ENCODE measurements at regions of chr3 and their contacts with region 1.

Region 1: GRCh38 chr3:24494618-24495325 is at the start of gene THRB:
- DNase-seq: peak; percentile 72
- ATAC-seq: peak; percentile 55
- H3K4me3 ChIP-seq: peak within 1 kb of the TSS; percentile 95
- H3K27ac ChIP-seq: peak within 1 kb of the TSS; percentile 73
- H3K4me1 ChIP-seq: peaks cover 54% of the 10 kb centered on the region
- H3K27me3 ChIP-seq: no peaks in the 10 kb centered on the region
- CTCF ChIP-seq: no peak
- total RNA-seq, gene THRB: 7.0 and 9.7 TPM in 2 replicates

Region 2: DNA sequence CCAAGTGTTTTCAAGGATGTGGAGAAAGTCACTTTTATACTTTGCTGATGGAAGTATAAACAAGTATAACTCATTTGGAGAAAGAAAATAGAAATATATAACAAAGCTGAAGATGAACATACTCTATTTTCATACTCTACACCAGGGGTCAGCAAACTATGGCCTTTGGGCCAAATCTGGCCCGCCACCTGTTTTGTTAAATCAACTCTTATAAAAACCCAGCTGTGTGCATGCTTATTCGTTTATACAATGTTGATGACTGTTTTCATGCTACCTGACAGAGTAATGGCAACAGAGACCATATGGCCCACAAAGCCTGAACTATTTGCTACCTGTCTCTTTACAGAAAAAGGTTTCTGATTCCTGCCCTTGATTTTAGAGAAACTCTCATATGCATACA is 425.7 kb before region 1 on chr3:
- CTCF ChIA-PET with region 1: no interaction called
- POLR2A ChIA-PET with region 1: no interaction called
- intact Hi-C with region 1: loop called (anchors 10 kb)
- DNase-seq: peak; percentile 42
- ATAC-seq: peak; percentile 48
- H3K4me3 ChIP-seq: no peak overlapping the region
- H3K27ac ChIP-seq: no peak overlapping the region
- H3K4me1 ChIP-seq: no peaks in the 10 kb centered on the region
- H3K27me3 ChIP-seq: no peaks in the 10 kb centered on the region
- CTCF ChIP-seq: peak; percentile 62

Region 3: GRCh38 chr3:24264748-24265158 is 230.0 kb before region 1 on chr3:
- CTCF ChIA-PET with region 1: no interaction called
- POLR2A ChIA-PET with region 1: no interaction called
- intact Hi-C with region 1: loop called (anchors 2 kb)
- DNase-seq: peak; percentile 81
- ATAC-seq: peak; percentile 46; the same call in 1 of the 2 replicates
- H3K4me3 ChIP-seq: no peak overlapping the region
- H3K27ac ChIP-seq: no peak overlapping the region
- H3K4me1 ChIP-seq: peaks cover 3% of the 10 kb centered on the region; the same call in 1 of the 2 replicates
- H3K27me3 ChIP-seq: no peaks in the 10 kb centered on the region
- CTCF ChIP-seq: peak; percentile 91

Region 4: GRCh38 chr3:24365194-24365612 is 129.6 kb before region 1 on chr3:
- CTCF ChIA-PET with region 1: interaction called, 3 read pairs
- POLR2A ChIA-PET with region 1: interaction called, 3 read pairs
- intact Hi-C with region 1: loop called (anchors 2 kb)
- DNase-seq: peak; percentile 98
- ATAC-seq: peak; percentile 100
- H3K4me3 ChIP-seq: peak overlapping the region; percentile 19; the same call in 1 of the 2 replicates
- H3K27ac ChIP-seq: peak overlapping the region; percentile 63
- H3K4me1 ChIP-seq: peaks cover 33% of the 10 kb centered on the region
- H3K27me3 ChIP-seq: no peaks in the 10 kb centered on the region
- CTCF ChIP-seq: peak; percentile 39

Region 5: GRCh38 chr3:24521420-24522145 is 26.8 kb after region 1 on chr3:
- CTCF ChIA-PET with region 1: interaction called, 4 read pairs
- POLR2A ChIA-PET with region 1: no interaction called
- intact Hi-C with region 1: loop called (anchors 2 kb)
- DNase-seq: peak; percentile 35
- ATAC-seq: peak; percentile 55
- H3K4me3 ChIP-seq: peak overlapping the region; percentile 74
- H3K27ac ChIP-seq: peak overlapping the region; percentile 48
- H3K4me1 ChIP-seq: peaks cover 39% of the 10 kb centered on the region
- H3K27me3 ChIP-seq: no peaks in the 10 kb centered on the region
- CTCF ChIP-seq: peak; percentile 37; the same call in 1 of the 2 replicates

Region 6: DNA sequence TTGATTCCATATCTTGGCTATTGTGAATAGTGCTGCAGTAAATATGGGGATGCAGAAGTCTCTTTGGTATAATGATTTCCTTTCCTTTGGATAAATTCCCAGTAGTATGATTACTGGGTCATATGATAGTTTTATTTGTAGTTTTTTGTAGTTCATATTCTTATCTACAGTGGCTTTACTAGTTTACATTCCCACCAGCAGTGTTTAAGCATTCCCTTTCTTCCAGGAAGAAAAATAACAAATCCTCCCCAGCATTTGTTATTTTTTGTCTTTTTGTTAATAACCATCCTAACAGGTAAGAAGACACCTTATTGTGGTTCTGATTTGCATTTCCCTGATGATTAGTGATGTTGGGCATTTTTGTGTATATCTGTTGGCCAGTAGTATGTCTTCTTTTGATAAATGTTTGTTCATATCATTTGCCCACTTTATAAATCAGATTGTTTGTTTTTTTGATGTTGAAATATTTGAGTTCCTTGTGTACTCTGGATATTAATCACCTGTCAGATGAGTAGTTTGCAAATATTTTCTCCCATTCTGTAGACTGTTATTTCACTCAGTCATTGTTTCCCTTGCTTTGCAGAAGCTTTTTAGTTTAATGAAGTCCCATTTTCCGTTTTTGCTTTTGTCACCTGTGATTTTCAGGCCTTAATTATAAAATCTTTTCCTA is 163.2 kb after region 1 on chr3:
- CTCF ChIA-PET with region 1: no interaction called
- POLR2A ChIA-PET with region 1: no interaction called
- intact Hi-C with region 1: no loop called
- DNase-seq: peak; percentile 72
- ATAC-seq: peak; percentile 91
- H3K4me3 ChIP-seq: peak overlapping the region; percentile 18; the same call in 1 of the 2 replicates
- H3K27ac ChIP-seq: peak overlapping the region; percentile 48
- H3K4me1 ChIP-seq: peaks cover 20% of the 10 kb centered on the region
- H3K27me3 ChIP-seq: no peaks in the 10 kb centered on the region
- CTCF ChIP-seq: no peak

Measured in PC-3 (cell line).